ENCODE measurements at regions of chr5 and their contacts with region 1.

Region 1: GRCh38 chr5:137778772-137779564 is 24.8 kb upstream of the HNRNPA0 start:
- DNase-seq: no peak
- ATAC-seq: no peak
- H3K4me3 ChIP-seq: no peak overlapping the region
- H3K27ac ChIP-seq: no peak overlapping the region
- H3K4me1 ChIP-seq: peaks cover 0 to 13% (median 0%) of the 10 kb centered on the region in 9 donors
- H3K27me3 ChIP-seq: no peaks in the 10 kb centered on the region
- CTCF ChIP-seq: peak; percentile 56 to 88 (median 81)

Region 2: DNA sequence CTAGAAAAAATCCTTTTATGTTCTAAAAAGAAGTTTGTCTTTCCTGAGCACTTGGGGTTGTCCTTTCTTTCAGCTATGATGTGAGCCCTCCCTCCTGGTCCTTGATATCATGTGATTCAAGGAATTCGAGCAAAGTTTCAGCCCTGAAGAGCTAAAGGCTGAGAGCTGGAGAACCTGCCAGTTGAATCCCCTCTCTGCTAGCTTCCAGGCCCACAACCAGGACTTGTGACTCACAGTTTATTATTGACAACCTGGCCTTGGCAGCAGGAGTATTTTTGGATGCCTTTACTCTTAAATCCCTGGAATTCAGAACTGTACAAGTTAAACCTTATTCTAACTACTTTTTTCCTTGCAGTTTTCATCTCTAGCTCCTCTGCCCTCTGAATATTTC is 462.6 kb before region 1 on chr5:
- intact Hi-C with region 1: no loop called
- DNase-seq: no peak
- ATAC-seq: peak in 4 of 8 donors; percentile 10 to 77 (median 33)
- H3K4me3 ChIP-seq: no peak overlapping the region
- H3K27ac ChIP-seq: peak overlapping the region in 1 of 10 donors; percentile 14
- H3K4me1 ChIP-seq: peaks cover 0 to 26% (median 11%) of the 10 kb centered on the region in 9 donors
- H3K27me3 ChIP-seq: no peaks in the 10 kb centered on the region
- CTCF ChIP-seq: no peak

Region 3: DNA sequence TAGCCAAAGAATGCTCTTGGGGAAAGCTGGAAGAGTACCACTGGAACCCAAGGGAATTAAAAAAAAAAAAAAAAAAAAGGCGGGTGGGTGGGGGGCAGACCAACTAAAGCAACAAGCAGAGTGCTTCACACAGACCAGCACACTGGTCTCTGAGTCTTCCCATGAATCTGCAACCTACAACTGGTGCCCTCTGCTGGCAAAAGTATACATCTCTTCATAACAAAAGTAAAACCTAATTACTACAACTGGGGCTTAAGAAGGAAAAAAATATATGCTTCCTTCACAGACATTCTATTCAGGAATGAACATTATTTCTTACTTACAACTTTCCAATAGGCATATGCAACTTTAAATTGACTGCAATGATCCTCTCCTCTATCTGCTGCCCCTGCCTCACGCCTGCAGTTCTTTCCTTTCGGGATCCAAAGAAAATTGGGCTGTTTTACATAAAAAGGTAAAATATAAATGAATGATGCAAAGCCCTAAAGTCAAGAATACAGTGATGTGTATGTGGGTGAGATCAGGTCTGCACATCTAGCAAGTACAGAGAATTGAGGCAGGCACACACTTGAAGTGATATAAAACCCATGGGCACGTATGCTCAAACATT is 35.8 kb before region 1 on chr5:
- intact Hi-C with region 1: no loop called
- DNase-seq: peak in 1 of 2 donors; percentile 78
- ATAC-seq: peak; percentile 46 to 84 (median 79)
- H3K4me3 ChIP-seq: no peak overlapping the region
- H3K27ac ChIP-seq: no peak overlapping the region
- H3K4me1 ChIP-seq: peaks cover 0 to 24% (median 9%) of the 10 kb centered on the region in 9 donors
- H3K27me3 ChIP-seq: no peaks in the 10 kb centered on the region
- CTCF ChIP-seq: peak; percentile 52 to 81 (median 68)

Region 4: GRCh38 chr5:137761189-137762008 is 17.6 kb before region 1 on chr5:
- intact Hi-C with region 1: loop called in 1 of 10 experiments (anchors 1 kb)
- DNase-seq: no peak
- ATAC-seq: no peak
- H3K4me3 ChIP-seq: no peak overlapping the region
- H3K27ac ChIP-seq: no peak overlapping the region
- H3K4me1 ChIP-seq: no peaks in the 10 kb centered on the region
- H3K27me3 ChIP-seq: no peaks in the 10 kb centered on the region
- CTCF ChIP-seq: no peak

Region 5: GRCh38 chr5:137888857-137889759 is 110.1 kb after region 1 on chr5 and contains the start of gene PKD2L2:
- intact Hi-C with region 1: loop called in 1 of 10 experiments (anchors 10 kb)
- DNase-seq: peak; percentile 84 to 91
- ATAC-seq: peak; percentile 97 to 99 (median 98)
- H3K4me3 ChIP-seq: peak within 1 kb of the TSS; percentile 41 to 65 (median 60)
- H3K27ac ChIP-seq: peak within 1 kb of the TSS; percentile 83 to 96 (median 92)
- H3K4me1 ChIP-seq: peaks cover 0 to 34% (median 22%) of the 10 kb centered on the region in 9 donors
- H3K27me3 ChIP-seq: no peaks in the 10 kb centered on the region
- CTCF ChIP-seq: peak in 4 of 9 donors; percentile 16 to 40 (median 26)
- total RNA-seq, gene PKD2L2: 0.42 to 1.7 (median 0.53) TPM in 9 of 10 donors, not detected in the other

Region 6: GRCh38 chr5:138035605-138036537 is 256.9 kb after region 1 on chr5:
- intact Hi-C with region 1: loop called in 1 of 10 experiments (anchors 10 kb)
- DNase-seq: peak in 1 of 2 donors; percentile 74
- ATAC-seq: peak; percentile 8 to 66 (median 55)
- H3K4me3 ChIP-seq: no peak overlapping the region
- H3K27ac ChIP-seq: peak overlapping the region in 6 of 10 donors; percentile 9 to 51 (median 36)
- H3K4me1 ChIP-seq: peaks cover 0 to 41% (median 25%) of the 10 kb centered on the region in 9 donors
- H3K27me3 ChIP-seq: no peaks in the 10 kb centered on the region
- CTCF ChIP-seq: peak; percentile 54 to 94 (median 82)

Region 7: GRCh38 chr5:138138949-138139780 is 360.2 kb after region 1 on chr5 and contains the start of gene NME5:
- intact Hi-C with region 1: loop called in 5 of 10 experiments (anchors 5 to 10 kb)
- DNase-seq: peak; percentile 57 to 61
- ATAC-seq: peak; percentile 82 to 95 (median 92)
- H3K4me3 ChIP-seq: peak within 1 kb of the TSS; percentile 33 to 78 (median 64)
- H3K27ac ChIP-seq: peak within 1 kb of the TSS in 1 of 10 donors; percentile 19
- H3K4me1 ChIP-seq: peaks cover 0 to 12% (median 0%) of the 10 kb centered on the region in 9 donors
- H3K27me3 ChIP-seq: peaks cover 0 to 44% (median 0%) of the 10 kb centered on the region in 7 donors
- CTCF ChIP-seq: no peak
- total RNA-seq, gene NME5: 2.0 to 5.9 (median 3.9) TPM

Measured in heart right ventricle (tissue), 16 donors.